ENCODE measurements at regions of chr11 and their contacts with region 1.

Region 1: GRCh38 chr11:78416305-78417178 is 1.1 kb downstream of the GAB2 start:
- DNase-seq: peak; percentile 81 to 87 (median 84)
- ATAC-seq: peak; percentile 69
- H3K4me3 ChIP-seq: peak overlapping the region; percentile 37 to 62
- H3K27ac ChIP-seq: peak overlapping the region; percentile 87 to 95 (median 92)
- H3K4me1 ChIP-seq: peaks cover 32% of the 10 kb centered on the region
- H3K27me3 ChIP-seq: no peaks in the 10 kb centered on the region
- CTCF ChIP-seq: peak in 5 of 7 experiments; percentile 26 to 59 (median 52)
- POLR2A ChIP-seq: peak; percentile 77 to 84 (median 82)

Region 2: DNA sequence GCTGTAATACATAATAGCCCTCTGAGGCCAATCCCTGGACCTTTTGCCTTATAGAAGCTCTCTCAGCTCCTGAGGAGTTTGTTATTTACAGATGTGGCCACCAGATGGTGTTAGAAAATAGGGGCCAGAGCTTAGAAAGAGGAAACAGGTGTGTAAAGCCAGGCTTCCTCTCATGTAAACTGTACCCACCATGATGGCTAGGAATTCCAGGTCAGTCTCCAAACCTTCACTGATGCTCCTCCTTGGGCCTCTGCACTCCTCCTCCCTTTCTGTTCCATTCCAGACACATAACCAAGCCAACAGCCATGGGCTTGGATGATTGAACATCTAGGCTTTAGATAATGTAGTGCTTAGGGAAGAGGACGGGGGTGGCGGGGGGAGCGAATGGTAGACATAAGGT is 188.1 kb before region 1 on chr11:
- intact Hi-C with region 1: loop called (anchors 10 kb)
- DNase-seq: peak in 3 of 4 donors; percentile 26 to 63 (median 45)
- ATAC-seq: peak; percentile 72
- H3K4me3 ChIP-seq: no peak overlapping the region
- H3K27ac ChIP-seq: no peak overlapping the region
- H3K4me1 ChIP-seq: no peaks in the 10 kb centered on the region
- H3K27me3 ChIP-seq: no peaks in the 10 kb centered on the region
- CTCF ChIP-seq: peak in 6 of 7 experiments; percentile 33 to 74 (median 54)
- POLR2A ChIP-seq: no peak

Region 3: GRCh38 chr11:78574386-78575381 is 158.1 kb after region 1 on chr11 and contains the start of gene NARS2:
- intact Hi-C with region 1: loop called (anchors 10 kb)
- DNase-seq: peak; percentile 97 to 98 (median 98)
- ATAC-seq: peak; percentile 99
- H3K4me3 ChIP-seq: peak within 1 kb of the TSS; percentile 69 to 83
- H3K27ac ChIP-seq: peak within 1 kb of the TSS; percentile 75 to 91 (median 84)
- H3K4me1 ChIP-seq: peaks cover 21% of the 10 kb centered on the region
- H3K27me3 ChIP-seq: no peaks in the 10 kb centered on the region
- CTCF ChIP-seq: peak in 1 of 7 experiments; percentile 9
- POLR2A ChIP-seq: peak; percentile 57 to 86 (median 80)
- total RNA-seq, gene NARS2: 10.1 to 24.7 TPM

Region 4: DNA sequence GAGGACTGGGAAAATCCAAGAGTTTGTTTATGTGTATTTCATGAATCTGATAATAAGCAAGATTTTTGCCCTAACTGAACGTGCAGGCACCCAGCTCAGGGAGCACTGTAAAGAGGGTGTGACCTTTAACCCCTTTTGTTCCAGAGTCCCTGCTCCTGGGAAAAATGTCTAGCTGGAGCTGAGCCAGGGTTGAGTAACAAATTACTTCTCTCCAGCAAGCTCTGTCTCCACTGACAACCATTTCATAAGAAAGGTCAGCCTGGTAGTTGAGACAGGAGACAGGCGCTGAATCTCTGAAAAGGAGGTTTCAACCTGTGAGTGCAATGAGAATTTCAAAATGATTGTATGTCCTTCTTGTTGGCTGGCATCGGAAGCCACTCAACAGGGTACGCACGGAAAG is 314.5 kb after region 1 on chr11:
- intact Hi-C with region 1: no loop called
- DNase-seq: no peak
- ATAC-seq: no peak
- H3K4me3 ChIP-seq: no peak overlapping the region
- H3K27ac ChIP-seq: no peak overlapping the region
- H3K4me1 ChIP-seq: no peaks in the 10 kb centered on the region
- H3K27me3 ChIP-seq: no peaks in the 10 kb centered on the region
- CTCF ChIP-seq: no peak
- POLR2A ChIP-seq: no peak

Measured in body of pancreas (tissue), 4 donors.